Tibial artery (tissue), 4 donors: ENCODE measurements at regions of chr5 and their contacts with region 1.

Region 1: DNA sequence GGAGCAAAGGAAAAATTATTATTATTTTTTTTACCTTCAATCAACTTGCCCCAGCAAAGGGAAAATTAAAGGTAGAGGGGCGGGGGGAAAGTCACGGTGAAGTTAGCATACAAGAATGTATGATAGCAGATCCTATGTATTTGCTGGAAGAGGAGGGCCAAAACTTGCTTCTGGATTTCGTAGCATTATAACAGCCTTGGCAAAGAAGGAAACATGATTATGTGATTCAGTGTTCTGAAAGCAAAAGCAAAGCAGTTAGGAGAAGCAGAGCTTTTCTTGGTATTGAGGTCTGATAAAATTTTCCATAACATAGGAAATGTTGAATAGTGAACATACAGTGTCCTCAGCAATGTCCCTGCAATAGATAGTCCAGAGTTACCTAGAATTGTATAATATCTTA is 32.4 kb downstream of the MAST4 start:
- DNase-seq: no peak
- H3K4me3 ChIP-seq: no peak overlapping the region
- H3K27ac ChIP-seq: no peak overlapping the region
- H3K4me1 ChIP-seq: no peaks in the 10 kb centered on the region
- H3K27me3 ChIP-seq: no peaks in the 10 kb centered on the region
- CTCF ChIP-seq: no peak

Region 2: GRCh38 chr5:64869419-64869818 is 1759.1 kb before region 1 on chr5:
- intact Hi-C with region 1: loop called (anchors 5 kb)
- DNase-seq: no peak
- H3K4me3 ChIP-seq: no peak overlapping the region
- H3K27ac ChIP-seq: no peak overlapping the region
- H3K4me1 ChIP-seq: peaks cover 0 to 11% (median 0%) of the 10 kb centered on the region in 4 donors
- H3K27me3 ChIP-seq: no peaks in the 10 kb centered on the region
- CTCF ChIP-seq: no peak